B cell (primary cell): ENCODE measurements at regions of chr3 and their contacts with region 1.

Region 1: GRCh38 chr3:129160891-129161859 is at the start of gene ISY1:
- DNase-seq: peak; percentile 97
- ATAC-seq: peak; percentile 85
- H3K4me3 ChIP-seq: peak within 1 kb of the TSS; percentile 73 to 99 (median 83)
- H3K4me3 Mint-ChIP-seq: peak within 1 kb of the TSS; percentile 100
- H3K27ac ChIP-seq: peak within 1 kb of the TSS; percentile 92 to 99
- H3K27ac Mint-ChIP-seq: peak within 1 kb of the TSS; percentile 100
- H3K4me1 ChIP-seq: peaks cover 18 to 24% of the 10 kb centered on the region in 2 donors
- H3K4me1 Mint-ChIP-seq: peaks cover 40% of the 10 kb centered on the region
- H3K27me3 ChIP-seq: no peaks in the 10 kb centered on the region
- H3K27me3 Mint-ChIP-seq: no peaks in the 10 kb centered on the region
- CTCF ChIP-seq: peak; percentile 83
- total RNA-seq, gene ISY1: 42.2 and 49.6 TPM in 2 replicates

Region 2: DNA sequence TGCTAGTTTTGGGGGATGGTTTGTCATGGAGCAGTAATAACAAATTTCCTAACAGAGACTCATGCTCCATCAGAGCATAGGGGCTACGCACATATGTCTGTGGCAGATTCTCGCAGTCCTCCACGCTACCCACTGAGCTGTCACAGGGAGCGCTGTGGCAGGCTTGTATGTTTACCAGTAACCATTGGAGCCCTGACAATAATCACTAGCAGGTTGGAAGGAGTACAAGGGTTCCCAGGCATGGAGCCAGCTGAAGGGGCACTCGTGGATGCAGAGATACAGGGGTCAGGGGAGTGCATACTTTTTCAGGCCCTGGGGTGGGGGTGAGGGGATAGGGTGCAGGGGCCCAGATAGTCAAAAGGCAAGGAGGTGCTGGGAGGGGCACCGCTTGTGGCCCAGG is 108.5 kb before region 1 on chr3:
- CTCF ChIA-PET with region 1: interaction called, 24 read pairs
- POLR2A ChIA-PET with region 1: no interaction called
- intact Hi-C with region 1: loop called (anchors 1 kb)
- DNase-seq: no peak
- ATAC-seq: no peak
- H3K4me3 ChIP-seq: no peak overlapping the region
- H3K4me3 Mint-ChIP-seq: no peak overlapping the region
- H3K27ac ChIP-seq: no peak overlapping the region
- H3K27ac Mint-ChIP-seq: no peak overlapping the region
- H3K4me1 ChIP-seq: peaks cover 4 to 7% of the 10 kb centered on the region in 2 donors
- H3K4me1 Mint-ChIP-seq: peaks cover 7% of the 10 kb centered on the region
- H3K27me3 ChIP-seq: peaks cover 0 to 10% (median 2%) of the 10 kb centered on the region in 4 experiments
- H3K27me3 Mint-ChIP-seq: peaks cover 31% of the 10 kb centered on the region
- CTCF ChIP-seq: no peak

Region 3: DNA sequence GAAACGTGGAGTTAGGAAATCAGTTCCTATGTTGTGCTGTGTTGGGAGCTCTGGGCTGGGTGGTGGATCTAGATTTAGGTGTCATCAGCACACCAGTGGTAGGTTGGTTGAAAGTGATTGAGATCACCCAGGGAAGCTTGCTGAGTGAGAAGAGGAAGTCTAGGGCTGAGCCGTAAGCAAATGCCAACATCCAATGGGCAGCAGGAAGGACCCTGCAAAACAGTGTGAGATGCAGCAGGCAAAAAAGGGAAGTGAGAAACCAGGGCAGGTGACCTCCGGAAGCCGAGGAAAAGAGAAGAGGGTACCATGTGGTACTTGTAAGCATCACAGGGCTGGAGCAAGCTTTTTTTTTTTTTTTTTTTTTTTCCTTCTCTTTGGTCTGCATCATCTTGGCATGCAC is 72.4 kb after region 1 on chr3:
- CTCF ChIA-PET with region 1: interaction called, 14 read pairs
- POLR2A ChIA-PET with region 1: interaction called, 3 read pairs
- intact Hi-C with region 1: loop called (anchors 1 kb)
- DNase-seq: peak; percentile 95
- ATAC-seq: peak; percentile 94
- H3K4me3 ChIP-seq: no peak overlapping the region
- H3K4me3 Mint-ChIP-seq: peak overlapping the region; percentile 50
- H3K27ac ChIP-seq: peak overlapping the region; percentile 71 to 87
- H3K27ac Mint-ChIP-seq: peak overlapping the region; percentile 97
- H3K4me1 ChIP-seq: peaks cover 28 to 36% of the 10 kb centered on the region in 2 donors
- H3K4me1 Mint-ChIP-seq: peaks cover 47% of the 10 kb centered on the region
- H3K27me3 ChIP-seq: no peaks in the 10 kb centered on the region
- H3K27me3 Mint-ChIP-seq: no peaks in the 10 kb centered on the region
- CTCF ChIP-seq: no peak

Region 4: DNA sequence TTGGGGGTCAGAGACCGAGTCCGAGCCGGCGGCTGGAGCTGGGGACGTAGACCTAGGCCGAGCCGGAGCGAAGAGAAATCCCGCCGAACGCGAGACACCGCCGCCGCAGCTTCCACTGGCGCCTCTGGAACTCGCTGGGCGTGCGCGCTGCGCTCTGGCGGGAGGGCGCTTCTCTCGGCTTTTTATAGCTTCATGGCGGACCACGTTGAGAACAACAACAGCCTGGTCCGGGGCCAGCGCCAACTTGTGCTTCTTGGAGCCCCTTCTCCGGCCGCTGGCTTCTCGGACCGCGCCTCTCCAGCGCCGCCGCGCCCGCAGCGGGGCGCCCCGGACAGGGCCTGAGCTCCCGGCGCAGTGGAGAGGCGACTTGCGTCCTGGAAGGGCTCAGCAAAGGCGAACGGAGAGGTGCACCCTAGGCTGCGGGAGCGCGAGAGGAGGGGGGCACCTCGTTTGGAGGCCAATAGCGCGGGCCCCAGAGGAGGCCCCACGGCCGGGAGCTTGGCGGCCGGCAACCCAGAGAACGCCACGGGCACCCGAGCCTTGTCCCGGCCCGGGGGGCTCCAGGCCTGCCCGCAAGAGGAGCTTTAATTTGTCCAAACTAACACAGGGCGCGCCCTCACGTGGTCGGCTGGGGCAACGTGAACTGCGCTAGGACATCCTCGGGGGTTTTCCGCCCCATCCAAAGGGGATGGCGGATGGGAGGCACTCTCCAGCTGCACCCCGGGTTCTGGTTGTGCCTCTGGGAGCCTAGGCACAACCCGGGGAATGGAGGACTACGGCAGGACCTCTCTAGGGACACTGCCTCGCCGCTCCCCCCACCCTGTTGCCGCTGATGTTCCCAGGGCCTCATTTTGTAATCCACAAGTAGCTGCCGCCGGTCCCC is 155.2 kb after region 1 on chr3:
- CTCF ChIA-PET with region 1: interaction called, 14 read pairs
- POLR2A ChIA-PET with region 1: interaction called, 5 read pairs
- intact Hi-C with region 1: no loop called
- DNase-seq: peak; percentile 88
- ATAC-seq: peak; percentile 45
- H3K4me3 ChIP-seq: peak overlapping the region; percentile 30 to 84 (median 82)
- H3K4me3 Mint-ChIP-seq: peak overlapping the region; percentile 82
- H3K27ac ChIP-seq: peak overlapping the region in 1 of 2 donors; percentile 78
- H3K27ac Mint-ChIP-seq: peak overlapping the region; percentile 87
- H3K4me1 ChIP-seq: peaks cover 26 to 40% of the 10 kb centered on the region in 2 donors
- H3K4me1 Mint-ChIP-seq: peaks cover 27% of the 10 kb centered on the region
- H3K27me3 ChIP-seq: peaks cover 0 to 30% (median 15%) of the 10 kb centered on the region in 4 experiments
- H3K27me3 Mint-ChIP-seq: peaks cover 18% of the 10 kb centered on the region
- CTCF ChIP-seq: peak; percentile 71

Region 5: DNA sequence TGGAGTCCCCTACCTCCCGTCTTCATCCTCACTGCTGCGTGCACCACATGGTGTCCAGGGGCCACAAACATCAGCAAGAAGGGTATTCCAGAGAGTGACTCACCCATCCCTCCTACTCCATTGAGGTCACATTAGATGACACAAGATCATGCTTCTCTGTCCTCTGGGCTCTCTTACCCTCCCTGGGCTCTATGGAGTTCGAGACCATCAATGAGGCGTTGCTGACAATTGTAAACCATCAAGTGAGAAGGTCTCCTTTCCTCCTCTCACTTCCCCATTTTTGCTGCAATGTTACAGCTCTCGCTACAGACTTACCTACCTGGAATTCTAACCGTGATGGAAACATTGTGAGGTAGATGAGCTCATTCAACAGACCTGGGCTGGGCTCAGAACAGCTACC is 169.2 kb after region 1 on chr3:
- CTCF ChIA-PET with region 1: no interaction called
- POLR2A ChIA-PET with region 1: no interaction called
- intact Hi-C with region 1: no loop called
- DNase-seq: peak; percentile 61
- ATAC-seq: peak; percentile 67
- H3K4me3 ChIP-seq: no peak overlapping the region
- H3K4me3 Mint-ChIP-seq: no peak overlapping the region
- H3K27ac ChIP-seq: no peak overlapping the region
- H3K27ac Mint-ChIP-seq: no peak overlapping the region
- H3K4me1 ChIP-seq: peaks cover 7 to 11% of the 10 kb centered on the region in 2 donors
- H3K4me1 Mint-ChIP-seq: peaks cover 8% of the 10 kb centered on the region
- H3K27me3 ChIP-seq: peaks cover 0 to 23% (median 6%) of the 10 kb centered on the region in 4 experiments
- H3K27me3 Mint-ChIP-seq: peaks cover 13% of the 10 kb centered on the region
- CTCF ChIP-seq: no peak